GM12878 (cell line): ENCODE measurements at regions of chr1 and their contacts with region 1.

Region 1: DNA sequence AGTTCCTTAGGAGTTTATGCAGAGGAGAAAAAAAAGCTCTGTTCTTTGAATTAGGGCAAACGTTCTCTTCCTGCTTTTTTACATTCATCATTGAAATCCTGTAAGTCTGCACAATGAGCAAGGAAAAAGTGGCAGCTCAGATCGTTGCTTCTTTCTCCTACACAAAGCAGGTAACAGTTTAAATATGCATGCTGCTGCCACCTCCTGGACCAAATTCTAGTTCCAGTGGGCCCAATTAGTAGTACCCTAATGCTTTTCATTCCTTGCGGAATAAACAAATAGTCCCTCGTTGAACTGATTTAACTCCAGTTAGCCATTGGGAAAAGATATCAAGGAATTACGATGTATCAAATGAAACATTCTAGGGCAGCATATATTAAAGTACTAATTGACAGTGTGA is 20.1 kb downstream of the YTHDF2 start:
- DNase-seq: no peak
- ATAC-seq: peak; percentile 49
- H3K4me3 ChIP-seq: no peak overlapping the region
- H3K27ac ChIP-seq: no peak overlapping the region
- H3K4me1 ChIP-seq: peaks cover 3% of the 10 kb centered on the region; the same call in 1 of the 2 replicates
- H3K27me3 ChIP-seq: no peaks in the 10 kb centered on the region
- CTCF ChIP-seq: peak in 2 of 3 experiments; percentile 18 to 21; a peak in 1 of 6 replicates
- EP300 ChIP-seq: no peak
- POLR2A ChIP-seq: no peak
- RAD21 ChIP-seq: no peak

Region 2: GRCh38 chr1:28642847-28643635 is 113.8 kb before region 1 on chr1 and contains the start of gene TAF12:
- CTCF ChIA-PET with region 1: interaction called, 18 read pairs
- POLR2A ChIA-PET with region 1: interaction called, 8 read pairs
- RAD21 ChIA-PET with region 1: interaction called, 7 read pairs
- SMC1A ChIA-PET with region 1: interaction called, 5 read pairs
- in situ Hi-C with region 1: no loop called
- intact Hi-C with region 1: no loop called
- DNase-seq: peak; percentile 93
- ATAC-seq: peak; percentile 90
- H3K4me3 ChIP-seq: peak within 1 kb of the TSS; percentile 92
- H3K27ac ChIP-seq: peak within 1 kb of the TSS; percentile 90
- H3K4me1 ChIP-seq: peaks cover 13% of the 10 kb centered on the region
- H3K27me3 ChIP-seq: no peaks in the 10 kb centered on the region
- CTCF ChIP-seq: peak; percentile 32 to 73 (median 42); a peak in 4 of 6 replicates
- EP300 ChIP-seq: 0 out of 4 replicates have a peak, but pooled peaks of 1 of the 2 experiments have one; percentile 31
- POLR2A ChIP-seq: peak; percentile 99
- RAD21 ChIP-seq: peak; percentile 49
- polyA plus RNA-seq, gene TAF12: 34.3 to 41.9 TPM